GM12878 (cell line): ENCODE measurements at regions of chr6 and their contacts with region 1.

Region 1: GRCh38 chr6:63307581-63308246 is 12.1 kb downstream of the LGSN start:
- DNase-seq: peak; percentile 13
- ATAC-seq: peak; percentile 99
- H3K4me3 ChIP-seq: no peak overlapping the region
- H3K27ac ChIP-seq: no peak overlapping the region
- H3K4me1 ChIP-seq: no peaks in the 10 kb centered on the region
- H3K27me3 ChIP-seq: no peaks in the 10 kb centered on the region
- CTCF ChIP-seq: peak; percentile 60 to 70 (median 63)
- EP300 ChIP-seq: no peak
- POLR2A ChIP-seq: no peak
- RAD21 ChIP-seq: peak; percentile 76

Region 2: GRCh38 chr6:63347599-63347998 is 39.9 kb after region 1 on chr6:
- CTCF ChIA-PET with region 1: interaction called, 22 read pairs
- POLR2A ChIA-PET with region 1: no interaction called
- RAD21 ChIA-PET with region 1: interaction called, 15 read pairs
- SMC1A ChIA-PET with region 1: interaction called, 20 read pairs
- in situ Hi-C with region 1: no loop called
- intact Hi-C with region 1: no loop called
- DNase-seq: no peak
- ATAC-seq: peak; percentile 25
- H3K4me3 ChIP-seq: no peak overlapping the region
- H3K27ac ChIP-seq: no peak overlapping the region
- H3K4me1 ChIP-seq: peaks cover 11% of the 10 kb centered on the region
- H3K27me3 ChIP-seq: no peaks in the 10 kb centered on the region
- CTCF ChIP-seq: no peak
- EP300 ChIP-seq: no peak
- POLR2A ChIP-seq: no peak
- RAD21 ChIP-seq: no peak

Region 3: GRCh38 chr6:63764318-63764916 is 456.7 kb after region 1 on chr6:
- CTCF ChIA-PET with region 1: interaction called, 11 read pairs
- POLR2A ChIA-PET with region 1: no interaction called
- RAD21 ChIA-PET with region 1: interaction called, 14 read pairs
- SMC1A ChIA-PET with region 1: interaction called, 12 read pairs
- in situ Hi-C with region 1: no loop called
- intact Hi-C with region 1: loop called (anchors 2 kb)
- DNase-seq: peak; percentile 5
- ATAC-seq: peak; percentile 64
- H3K4me3 ChIP-seq: no peak overlapping the region
- H3K27ac ChIP-seq: no peak overlapping the region
- H3K4me1 ChIP-seq: no peaks in the 10 kb centered on the region
- H3K27me3 ChIP-seq: no peaks in the 10 kb centered on the region
- CTCF ChIP-seq: no peak; a peak in 2 of 6 replicates
- EP300 ChIP-seq: no peak
- POLR2A ChIP-seq: no peak
- RAD21 ChIP-seq: peak; percentile 63

Region 4: DNA sequence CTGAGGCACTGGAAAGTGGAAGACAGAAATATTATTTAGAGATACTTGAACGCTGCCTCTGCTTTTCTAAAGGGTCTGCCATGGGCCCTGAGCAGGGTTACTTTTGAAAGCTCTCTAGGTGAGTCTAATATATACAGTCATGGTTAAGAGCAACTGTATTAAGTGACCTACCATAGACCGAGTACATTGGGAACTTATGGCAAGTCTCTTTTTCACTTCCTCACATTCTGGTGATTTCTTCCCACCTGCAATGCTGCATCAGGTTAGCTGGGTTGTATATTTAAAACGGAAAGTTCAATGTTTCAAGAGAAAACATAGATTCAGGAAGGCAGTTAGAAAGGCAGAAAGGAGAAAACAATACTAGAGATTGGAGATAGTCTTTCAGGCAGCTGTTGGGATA is 482.6 kb after region 1 on chr6:
- CTCF ChIA-PET with region 1: interaction called, 5 read pairs
- POLR2A ChIA-PET with region 1: no interaction called
- RAD21 ChIA-PET with region 1: no interaction called
- SMC1A ChIA-PET with region 1: no interaction called
- in situ Hi-C with region 1: loop called (anchors 25 kb)
- intact Hi-C with region 1: no loop called
- DNase-seq: no peak
- ATAC-seq: peak; percentile 70
- H3K4me3 ChIP-seq: no peak overlapping the region
- H3K27ac ChIP-seq: no peak overlapping the region
- H3K4me1 ChIP-seq: peaks cover 6% of the 10 kb centered on the region; the same call in 1 of the 2 replicates
- H3K27me3 ChIP-seq: no peaks in the 10 kb centered on the region; a peak in 1 of 4 replicates
- CTCF ChIP-seq: no peak
- EP300 ChIP-seq: no peak
- POLR2A ChIP-seq: no peak
- RAD21 ChIP-seq: no peak